Activated CD8-positive, alpha-beta T cell treated with anti-CD3 and anti-CD28 coated beads, Interleukin-2, amount 10 ng/mL, durations not matched to agents 7 days and 5 days (primary cell): ENCODE measurements at regions of chr17 and their contacts with region 1.

Region 1: GRCh38 chr17:49715717-49716279 is 8.0 kb upstream of the SLC35B1 start:
- DNase-seq: peak; percentile 44
- ATAC-seq: peak; percentile 70
- H3K4me3 Mint-ChIP-seq: no peak overlapping the region
- H3K27ac Mint-ChIP-seq: peak overlapping the region; percentile 50
- H3K4me1 Mint-ChIP-seq: peaks cover 34% of the 10 kb centered on the region
- H3K27me3 Mint-ChIP-seq: no peaks in the 10 kb centered on the region

Region 2: DNA sequence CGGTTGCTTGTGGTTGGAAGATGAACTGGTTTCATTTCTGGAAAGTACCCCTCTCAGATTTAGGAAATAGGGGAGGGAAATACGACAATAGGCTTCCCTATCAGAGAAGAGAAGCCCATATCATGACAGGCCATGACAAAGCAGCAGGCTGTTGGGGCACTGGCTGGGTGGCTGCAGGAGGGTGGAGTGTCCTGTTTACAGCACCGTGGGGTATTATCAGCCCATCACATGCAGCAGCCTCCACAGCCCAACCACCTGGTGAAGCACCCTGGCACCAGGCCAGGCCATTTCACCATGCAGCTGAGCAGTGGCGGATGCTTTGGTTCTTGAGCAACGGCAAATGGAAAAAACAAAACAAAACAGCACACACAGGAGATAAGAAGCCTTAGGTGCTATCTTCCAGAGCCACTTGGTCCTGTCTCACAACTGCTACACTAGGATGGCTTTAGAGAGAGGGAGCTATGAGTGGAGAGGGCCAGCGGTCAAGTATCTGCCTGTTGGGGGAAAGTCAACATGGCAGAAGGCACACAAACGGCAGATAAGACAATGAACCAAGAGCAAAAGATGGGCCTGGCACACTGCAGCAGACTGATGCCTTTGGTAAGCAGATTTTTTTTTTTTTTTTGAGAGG is 24.0 kb after region 1 on chr17:
- CTCF ChIA-PET with region 1: no interaction called
- POLR2A ChIA-PET with region 1: interaction called, 10 read pairs
- DNase-seq: peak; percentile 92
- ATAC-seq: peak; percentile 93
- H3K4me3 Mint-ChIP-seq: peak overlapping the region; percentile 84
- H3K27ac Mint-ChIP-seq: peak overlapping the region; percentile 98
- H3K4me1 Mint-ChIP-seq: peaks cover 80% of the 10 kb centered on the region
- H3K27me3 Mint-ChIP-seq: no peaks in the 10 kb centered on the region

Region 3: GRCh38 chr17:49861150-49861892 is 145.5 kb after region 1 on chr17:
- CTCF ChIA-PET with region 1: no interaction called
- POLR2A ChIA-PET with region 1: no interaction called
- DNase-seq: peak; percentile 64
- ATAC-seq: peak; percentile 66
- H3K4me3 Mint-ChIP-seq: no peak overlapping the region
- H3K27ac Mint-ChIP-seq: no peak overlapping the region
- H3K4me1 Mint-ChIP-seq: no peaks in the 10 kb centered on the region
- H3K27me3 Mint-ChIP-seq: peaks cover 2% of the 10 kb centered on the region